Posterior vena cava (tissue), 2 donors: ENCODE measurements at regions of chr7 and their contacts with region 1.

Region 1: DNA sequence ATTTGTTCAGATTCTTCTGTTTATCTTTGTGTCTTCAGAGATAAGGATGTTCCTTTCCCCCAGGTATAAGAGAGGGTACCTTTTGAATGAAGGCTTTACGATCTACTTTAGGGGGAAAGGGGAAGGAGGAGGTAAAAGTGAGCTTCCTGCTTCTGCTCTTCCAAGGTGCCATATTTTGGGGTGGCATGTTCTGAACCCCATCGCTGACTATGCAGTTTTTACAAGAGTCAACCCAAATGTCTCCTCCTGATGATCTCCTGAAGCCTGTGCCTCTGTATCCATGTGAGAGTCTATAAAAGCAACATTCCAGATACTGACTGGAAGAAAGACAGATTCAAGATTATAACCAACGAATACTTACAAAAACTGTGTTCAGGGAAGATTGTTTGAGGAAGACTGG is 102.5 kb downstream of the ZNF277 start:
- DNase-seq: no peak

Region 2: DNA sequence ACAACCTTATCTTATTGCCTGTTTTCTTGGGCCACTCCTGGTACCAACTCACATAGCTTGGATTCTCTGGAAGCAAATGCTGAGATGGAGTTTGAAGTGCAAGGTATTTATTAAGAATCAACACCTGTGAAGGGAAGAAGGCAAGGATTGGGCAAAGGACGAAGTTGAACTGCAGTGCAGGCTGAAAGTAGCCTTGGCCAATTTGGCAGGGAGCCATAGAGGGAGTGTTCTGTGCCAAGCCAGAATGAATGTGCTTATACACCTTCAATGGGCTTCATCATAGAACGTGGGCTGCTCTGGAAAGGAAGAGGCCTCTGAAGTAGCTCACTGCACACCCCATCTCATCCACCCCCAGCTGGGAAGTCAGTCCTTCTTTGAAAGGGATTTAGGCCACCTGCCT is 61.5 kb after region 1 on chr7:
- intact Hi-C with region 1: loop called in 1 of 2 experiments (anchors 2 kb)
- DNase-seq: no peak